Uterus (tissue), 4 donors: ENCODE measurements at regions of chr4 and their contacts with region 1.

Region 1: GRCh38 chr4:48588230-48589097 is 98.4 kb downstream of the ZAR1 start:
- DNase-seq: no peak
- H3K4me3 ChIP-seq: no peak overlapping the region
- H3K27ac ChIP-seq: no peak overlapping the region
- H3K4me1 ChIP-seq: no peaks in the 10 kb centered on the region
- H3K27me3 ChIP-seq: no peaks in the 10 kb centered on the region
- CTCF ChIP-seq: no peak
- POLR2A ChIP-seq: no peak

Region 2: DNA sequence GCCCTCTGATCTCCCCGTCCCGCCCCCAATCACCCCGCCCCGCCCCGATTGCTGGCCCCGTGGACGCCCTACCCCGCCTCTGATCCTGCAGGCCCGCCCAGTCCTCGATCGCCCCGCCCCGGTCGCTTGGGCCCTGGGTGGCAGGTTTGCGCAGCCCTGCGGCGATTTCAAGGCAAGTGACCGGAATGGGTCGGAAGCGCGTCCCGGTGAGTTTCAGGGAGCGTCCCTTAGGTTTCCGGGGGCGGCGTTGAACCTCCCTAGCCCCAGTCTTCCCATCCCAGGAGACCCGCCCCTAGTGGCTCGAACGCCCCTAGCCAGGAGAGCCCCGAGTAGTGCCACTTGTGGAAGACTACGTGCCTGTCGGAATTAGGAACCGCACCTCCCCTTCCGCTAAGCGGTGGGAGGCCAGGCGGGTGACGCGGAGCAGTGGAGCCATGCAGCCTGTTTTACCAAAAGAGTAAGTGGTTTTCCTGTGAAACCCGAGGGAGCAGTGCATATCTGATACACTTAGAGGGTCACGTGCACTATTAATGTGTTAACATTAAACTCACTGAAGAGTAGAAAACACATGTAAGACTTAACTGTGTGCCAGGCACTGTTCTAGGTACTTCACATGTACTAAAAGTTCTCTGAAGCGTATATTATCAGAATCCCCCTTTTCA is 318.5 kb before region 1 on chr4:
- intact Hi-C with region 1: no loop called
- DNase-seq: peak; percentile 88 to 89
- H3K4me3 ChIP-seq: peak overlapping the region; percentile 79 to 83
- H3K27ac ChIP-seq: peak overlapping the region; percentile 71 to 87
- H3K4me1 ChIP-seq: no peaks in the 10 kb centered on the region
- H3K27me3 ChIP-seq: no peaks in the 10 kb centered on the region
- CTCF ChIP-seq: peak in 2 of 4 experiments; percentile 23 to 44
- POLR2A ChIP-seq: peak; percentile 2 to 3

Region 3: DNA sequence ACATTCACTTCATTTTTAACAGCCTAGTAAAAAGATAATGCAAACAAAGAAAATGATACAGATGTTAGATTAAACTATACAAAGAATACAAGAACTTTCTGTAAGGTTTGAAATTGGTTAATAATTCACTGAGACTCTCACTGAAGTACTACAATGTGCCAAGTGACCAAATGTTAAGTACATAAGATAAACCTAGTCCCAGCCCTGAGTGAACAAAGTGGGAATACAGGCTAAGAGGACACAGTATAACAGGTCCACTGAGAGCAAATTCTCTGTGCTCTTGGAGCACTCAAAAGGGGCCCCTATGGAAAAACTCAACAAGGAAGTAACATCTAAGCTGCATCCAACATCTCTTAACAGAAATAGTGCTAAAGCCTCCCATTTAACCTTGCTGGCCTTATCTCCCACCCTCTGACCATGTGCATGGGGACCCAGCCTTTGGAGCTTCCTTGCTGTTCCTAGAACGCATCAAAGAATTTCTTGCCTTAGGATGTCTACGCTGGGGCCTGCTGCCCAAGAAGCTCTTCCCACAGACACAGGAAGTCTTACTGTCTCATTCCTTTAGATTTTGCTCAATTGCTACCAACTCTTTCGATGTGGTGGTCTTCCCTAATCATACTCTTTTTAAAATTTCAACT is 15.0 kb after region 1 on chr4:
- intact Hi-C with region 1: no loop called
- DNase-seq: no peak
- H3K4me3 ChIP-seq: no peak overlapping the region
- H3K27ac ChIP-seq: no peak overlapping the region
- H3K4me1 ChIP-seq: no peaks in the 10 kb centered on the region
- H3K27me3 ChIP-seq: no peaks in the 10 kb centered on the region
- CTCF ChIP-seq: no peak
- POLR2A ChIP-seq: no peak

Region 4: GRCh38 chr4:48792348-48793006 is 204.0 kb after region 1 on chr4:
- intact Hi-C with region 1: no loop called
- DNase-seq: no peak
- H3K4me3 ChIP-seq: no peak overlapping the region
- H3K27ac ChIP-seq: peak overlapping the region in 1 of 2 donors; percentile 39
- H3K4me1 ChIP-seq: no peaks in the 10 kb centered on the region
- H3K27me3 ChIP-seq: no peaks in the 10 kb centered on the region
- CTCF ChIP-seq: no peak
- POLR2A ChIP-seq: no peak

Region 5: GRCh38 chr4:48963042-48963679 is 374.7 kb after region 1 on chr4:
- intact Hi-C with region 1: loop called (anchors 10 kb)
- DNase-seq: peak; percentile 61 to 68
- H3K4me3 ChIP-seq: no peak overlapping the region
- H3K27ac ChIP-seq: no peak overlapping the region
- H3K4me1 ChIP-seq: no peaks in the 10 kb centered on the region
- H3K27me3 ChIP-seq: no peaks in the 10 kb centered on the region
- CTCF ChIP-seq: peak; percentile 89 to 93 (median 92)
- POLR2A ChIP-seq: no peak